ENCODE measurements at regions of chr4 and their contacts with region 1.

Region 1: GRCh38 chr4:80434238-80434637 is 98.7 kb downstream of the CFAP299 start:
- DNase-seq: no peak
- H3K4me3 ChIP-seq: no peak overlapping the region
- H3K27ac ChIP-seq: no peak overlapping the region
- H3K4me1 ChIP-seq: no peaks in the 10 kb centered on the region
- H3K27me3 ChIP-seq: no peaks in the 10 kb centered on the region
- CTCF ChIP-seq: no peak
- EP300 ChIP-seq: no peak
- POLR2A ChIP-seq: no peak

Region 2: DNA sequence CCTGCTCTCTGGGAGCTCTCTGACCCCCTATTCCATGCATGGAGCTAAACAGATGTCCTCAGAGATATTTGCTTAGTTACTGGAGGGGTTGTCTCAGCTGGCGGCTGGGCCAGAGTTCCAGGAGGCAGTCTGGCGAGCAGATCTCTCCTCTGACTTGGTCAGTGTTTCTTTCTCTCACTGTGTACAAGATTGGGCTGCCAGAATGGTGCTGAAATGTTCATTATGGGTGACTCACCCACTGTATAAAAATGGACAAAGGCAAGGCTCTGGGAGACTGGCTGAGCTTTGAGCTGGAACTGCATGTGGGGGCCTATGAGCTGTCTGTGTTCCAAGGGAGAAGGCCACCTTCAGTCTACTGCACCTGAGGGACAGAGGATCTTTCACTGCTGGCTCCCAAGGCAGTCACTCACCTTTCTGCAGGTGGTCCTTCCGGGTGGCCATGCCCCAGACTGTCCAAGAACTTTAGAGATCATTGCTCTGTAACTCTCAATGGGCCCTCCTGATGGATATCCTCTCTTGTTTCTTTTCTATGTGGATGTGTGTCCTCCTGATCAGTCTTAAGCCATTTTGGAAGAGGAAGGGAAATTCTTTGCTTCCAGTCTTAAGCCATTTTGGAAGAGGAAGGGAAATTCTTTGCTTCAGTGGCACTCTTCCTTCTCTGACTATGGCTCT is 10.5 kb before region 1 on chr4:
- intact Hi-C with region 1: loop called (anchors 1 kb)
- DNase-seq: no peak
- H3K4me3 ChIP-seq: no peak overlapping the region
- H3K27ac ChIP-seq: no peak overlapping the region
- H3K4me1 ChIP-seq: no peaks in the 10 kb centered on the region
- H3K27me3 ChIP-seq: no peaks in the 10 kb centered on the region
- CTCF ChIP-seq: no peak
- EP300 ChIP-seq: no peak
- POLR2A ChIP-seq: no peak

Measured in esophagus muscularis mucosa (tissue), 4 donors.